GM18951 (cell line): ENCODE measurements at regions of chr9 and their contacts with region 1.

Region 1: GRCh38 chr9:1939926-1940368 is 75.2 kb upstream of the SMARCA2 start:
- POLR2A ChIP-seq: no peak

Region 2: DNA sequence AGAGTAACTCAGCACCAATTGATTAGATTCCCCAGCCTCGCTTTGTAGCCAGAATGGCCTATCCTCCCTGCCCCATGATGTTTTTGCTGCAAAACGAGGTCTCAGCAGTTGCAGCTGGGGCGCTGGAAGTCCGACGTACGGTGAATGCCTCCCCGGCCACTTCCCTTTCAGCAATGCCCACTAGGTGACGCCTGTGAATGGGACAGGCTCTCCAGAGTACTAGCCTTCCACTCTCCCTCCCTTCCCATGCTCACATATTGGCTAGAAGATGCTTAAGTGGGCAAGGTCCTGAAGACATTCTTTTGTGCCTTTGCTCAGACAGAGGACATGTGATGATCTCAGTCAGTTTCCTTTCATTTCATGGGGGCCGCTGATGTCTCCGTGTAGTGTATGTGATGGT is 839.0 kb before region 1 on chr9:
- in situ Hi-C with region 1: no loop called
- POLR2A ChIP-seq: no peak

Region 3: DNA sequence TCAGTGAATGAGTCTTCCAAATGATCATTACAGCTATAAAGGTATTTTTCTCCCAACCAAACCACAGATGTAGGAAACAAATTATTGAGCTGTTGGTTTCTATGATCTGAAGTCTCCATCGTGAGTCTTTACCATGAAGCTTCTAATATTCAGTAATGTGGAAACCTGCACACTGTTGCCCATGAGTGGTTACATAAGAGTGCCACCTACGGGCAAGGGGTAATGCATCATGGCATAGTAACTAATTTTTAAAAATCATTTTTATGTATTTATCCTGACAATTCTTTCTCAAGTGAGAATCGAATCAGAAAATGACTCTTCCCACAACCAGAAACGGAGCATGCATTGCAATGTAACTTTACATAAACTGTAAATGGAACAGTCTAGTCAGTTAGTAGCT is 207.3 kb before region 1 on chr9:
- in situ Hi-C with region 1: loop called (anchors 10 kb)
- POLR2A ChIP-seq: no peak